ENCODE measurements at regions of chr10 and their contacts with region 1.

Region 1: DNA sequence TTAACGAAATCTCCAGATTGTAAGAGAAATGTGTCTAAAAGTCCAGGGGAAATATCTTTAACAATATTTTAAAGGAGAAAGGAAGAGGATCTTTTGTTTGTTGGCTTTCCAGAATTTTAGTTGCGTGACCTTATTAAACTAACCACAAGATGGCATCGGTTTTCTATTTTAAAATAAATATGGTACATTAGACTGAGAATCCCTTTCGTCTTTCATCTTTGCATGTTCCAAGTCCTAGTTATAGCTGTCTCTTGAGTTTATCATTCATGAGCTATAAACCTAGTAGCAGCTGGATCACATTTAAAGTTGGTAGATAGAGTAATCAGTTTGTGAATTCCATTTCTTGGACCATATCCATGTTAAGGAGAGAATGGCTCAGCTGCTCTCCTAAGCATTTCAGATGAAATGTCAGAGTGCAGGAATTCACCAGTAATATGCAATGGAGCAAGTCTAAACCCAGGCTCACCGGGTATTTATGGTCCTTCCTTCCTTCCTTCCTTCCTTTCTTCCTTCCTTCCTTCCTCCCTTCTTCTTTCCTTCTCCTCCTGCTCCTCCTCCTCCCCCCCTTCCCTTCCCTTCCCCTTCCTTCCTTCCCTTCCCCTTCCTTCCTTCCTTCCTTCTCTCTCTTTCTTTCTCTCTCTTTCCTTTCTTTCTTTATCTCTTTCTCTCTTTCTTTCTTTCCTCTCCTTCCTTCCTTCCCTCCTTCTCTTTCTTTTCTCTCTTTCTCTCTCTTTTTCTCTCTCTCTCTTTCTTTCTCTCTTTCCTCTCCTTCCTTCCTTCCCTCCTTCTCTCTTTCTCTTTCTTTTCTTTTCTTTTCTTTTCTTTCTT is 57.8 kb upstream of the RAB18 start:
- DNase-seq: peak in 3 of 14 experiments; percentile 53 to 57 (median 55)
- ATAC-seq: peak; percentile 52
- H3K4me3 ChIP-seq: no peak overlapping the region
- H3K4me3 Mint-ChIP-seq: no peak overlapping the region
- H3K27ac ChIP-seq: no peak overlapping the region
- H3K27ac Mint-ChIP-seq: no peak overlapping the region
- H3K4me1 ChIP-seq: peaks cover 3% of the 10 kb centered on the region
- H3K4me1 Mint-ChIP-seq: peaks cover 17% of the 10 kb centered on the region
- H3K27me3 ChIP-seq: no peaks in the 10 kb centered on the region
- H3K27me3 Mint-ChIP-seq: no peaks in the 10 kb centered on the region
- CTCF ChIP-seq: peak; percentile 67

Region 2: GRCh38 chr10:26776258-26776657 is 670.0 kb before region 1 on chr10:
- CTCF ChIA-PET with region 1: no interaction called
- POLR2A ChIA-PET with region 1: no interaction called
- intact Hi-C with region 1: no loop called
- DNase-seq: no peak
- ATAC-seq: no peak
- H3K4me3 ChIP-seq: no peak overlapping the region
- H3K4me3 Mint-ChIP-seq: no peak overlapping the region
- H3K27ac ChIP-seq: no peak overlapping the region
- H3K27ac Mint-ChIP-seq: no peak overlapping the region
- H3K4me1 ChIP-seq: peaks cover 17% of the 10 kb centered on the region
- H3K4me1 Mint-ChIP-seq: peaks cover 86% of the 10 kb centered on the region
- H3K27me3 ChIP-seq: no peaks in the 10 kb centered on the region
- H3K27me3 Mint-ChIP-seq: no peaks in the 10 kb centered on the region
- CTCF ChIP-seq: no peak

Region 3: GRCh38 chr10:27536437-27536836 is 90.1 kb after region 1 on chr10:
- CTCF ChIA-PET with region 1: no interaction called
- POLR2A ChIA-PET with region 1: interaction called, 3 read pairs
- intact Hi-C with region 1: loop called in 1 of 2 experiments (anchors 10 kb)
- DNase-seq: no peak
- ATAC-seq: no peak
- H3K4me3 ChIP-seq: no peak overlapping the region
- H3K4me3 Mint-ChIP-seq: no peak overlapping the region
- H3K27ac ChIP-seq: no peak overlapping the region
- H3K27ac Mint-ChIP-seq: no peak overlapping the region
- H3K4me1 ChIP-seq: no peaks in the 10 kb centered on the region
- H3K4me1 Mint-ChIP-seq: peaks cover 23% of the 10 kb centered on the region
- H3K27me3 ChIP-seq: no peaks in the 10 kb centered on the region
- H3K27me3 Mint-ChIP-seq: no peaks in the 10 kb centered on the region
- CTCF ChIP-seq: no peak

Region 4: DNA sequence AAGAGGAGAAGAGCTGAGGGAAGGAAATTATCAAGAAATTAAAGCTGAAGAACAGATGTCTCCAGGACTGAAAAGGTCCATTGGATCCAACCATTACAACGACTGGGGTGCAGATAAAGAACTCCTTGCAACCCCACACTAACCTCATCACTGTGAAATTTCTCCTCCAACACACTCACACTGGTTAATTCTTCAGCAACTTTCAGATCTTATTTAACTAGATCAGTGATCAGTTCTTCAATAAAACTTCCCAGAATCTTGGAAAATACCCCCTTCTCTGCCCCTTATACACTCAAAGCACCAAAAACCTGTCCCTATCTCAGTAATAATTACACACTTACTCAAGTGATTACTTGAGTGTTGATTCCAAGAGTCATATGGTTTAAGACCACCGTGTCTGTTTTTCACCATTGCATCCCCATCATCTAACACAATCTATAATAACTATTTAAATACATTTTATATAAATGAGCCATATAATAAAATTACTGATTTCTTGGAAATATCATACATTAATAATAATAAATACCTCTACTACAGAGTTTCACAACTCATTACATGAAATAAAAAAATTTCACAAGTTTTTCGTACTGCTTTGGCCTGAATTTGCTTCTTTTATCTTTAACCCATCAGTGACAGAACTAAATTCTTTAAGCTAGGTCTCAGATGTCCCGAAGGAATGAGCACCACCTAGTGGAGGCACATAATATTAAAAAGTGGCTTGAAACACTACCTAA is 732.9 kb after region 1 on chr10:
- CTCF ChIA-PET with region 1: no interaction called
- POLR2A ChIA-PET with region 1: no interaction called
- intact Hi-C with region 1: loop called in 1 of 2 experiments (anchors 5 kb)
- DNase-seq: peak in 5 of 14 experiments; percentile 8 to 78 (median 71)
- ATAC-seq: peak; percentile 75
- H3K4me3 ChIP-seq: peak overlapping the region; percentile 50
- H3K4me3 Mint-ChIP-seq: peak overlapping the region; percentile 89
- H3K27ac ChIP-seq: peak overlapping the region in 1 of 2 donors; percentile 15
- H3K27ac Mint-ChIP-seq: peak overlapping the region; percentile 87
- H3K4me1 ChIP-seq: peaks cover 9% of the 10 kb centered on the region
- H3K4me1 Mint-ChIP-seq: peaks cover 55% of the 10 kb centered on the region
- H3K27me3 ChIP-seq: no peaks in the 10 kb centered on the region
- H3K27me3 Mint-ChIP-seq: no peaks in the 10 kb centered on the region
- CTCF ChIP-seq: peak; percentile 90

Region 5: GRCh38 chr10:28387141-28387540 is 940.8 kb after region 1 on chr10:
- CTCF ChIA-PET with region 1: no interaction called
- POLR2A ChIA-PET with region 1: no interaction called
- intact Hi-C with region 1: loop called (anchors 5 kb)
- DNase-seq: no peak
- ATAC-seq: no peak
- H3K4me3 ChIP-seq: no peak overlapping the region
- H3K4me3 Mint-ChIP-seq: no peak overlapping the region
- H3K27ac ChIP-seq: no peak overlapping the region
- H3K27ac Mint-ChIP-seq: no peak overlapping the region
- H3K4me1 ChIP-seq: peaks cover 4% of the 10 kb centered on the region
- H3K4me1 Mint-ChIP-seq: peaks cover 10% of the 10 kb centered on the region
- H3K27me3 ChIP-seq: no peaks in the 10 kb centered on the region
- H3K27me3 Mint-ChIP-seq: peaks cover 5% of the 10 kb centered on the region
- CTCF ChIP-seq: no peak